Activated B cell treated with CpG ODN at 0.5 μM for 24 hours (primary cell): ENCODE measurements at regions of chr10 and their contacts with region 1.

Region 1: GRCh38 chr10:90977162-90977854 is 56.4 kb upstream of the ANKRD1 start:
- DNase-seq: peak; percentile 48
- ATAC-seq: peak; percentile 94
- H3K4me3 Mint-ChIP-seq: peak overlapping the region; percentile 46
- H3K27ac Mint-ChIP-seq: peak overlapping the region; percentile 86
- H3K4me1 Mint-ChIP-seq: peaks cover 38% of the 10 kb centered on the region
- H3K27me3 Mint-ChIP-seq: no peaks in the 10 kb centered on the region
- CTCF ChIP-seq: no peak

Region 2: GRCh38 chr10:90999512-91000172 is 22.3 kb after region 1 on chr10:
- CTCF ChIA-PET with region 1: interaction called, 6 read pairs
- POLR2A ChIA-PET with region 1: interaction called, 22 read pairs
- intact Hi-C with region 1: loop called (anchors 1 kb)
- DNase-seq: no peak
- ATAC-seq: peak; percentile 80
- H3K4me3 Mint-ChIP-seq: peak overlapping the region; percentile 56
- H3K27ac Mint-ChIP-seq: peak overlapping the region; percentile 93
- H3K4me1 Mint-ChIP-seq: peaks cover 63% of the 10 kb centered on the region
- H3K27me3 Mint-ChIP-seq: no peaks in the 10 kb centered on the region
- CTCF ChIP-seq: no peak